ENCODE measurements at regions of chr11 and their contacts with region 1.

Region 1: DNA sequence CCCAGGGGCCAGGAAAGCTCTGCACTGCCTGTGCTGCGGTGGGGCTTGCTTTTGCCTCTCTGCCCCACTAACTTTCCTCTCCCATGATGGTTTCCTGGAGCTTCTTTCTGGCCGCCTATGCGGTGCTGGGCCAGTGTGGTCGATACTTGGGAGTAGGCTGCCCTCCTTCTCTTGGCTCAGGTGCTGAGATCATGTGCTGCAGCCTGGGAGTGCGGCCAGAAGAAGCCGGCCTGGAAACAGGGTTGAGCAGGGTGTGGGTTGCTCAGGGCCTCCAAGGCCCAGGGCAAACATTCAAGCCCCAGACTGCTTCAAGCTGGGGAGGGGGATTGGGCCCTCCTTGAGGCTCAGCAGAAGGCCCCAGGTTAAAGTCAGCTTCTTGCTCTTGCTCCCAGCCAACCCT is 125.0 kb downstream of the NTM start:
- DNase-seq: no peak
- H3K4me3 ChIP-seq: no peak overlapping the region
- H3K27ac ChIP-seq: no peak overlapping the region
- H3K4me1 ChIP-seq: no peaks in the 10 kb centered on the region
- H3K27me3 ChIP-seq: no peaks in the 10 kb centered on the region
- CTCF ChIP-seq: no peak

Region 2: DNA sequence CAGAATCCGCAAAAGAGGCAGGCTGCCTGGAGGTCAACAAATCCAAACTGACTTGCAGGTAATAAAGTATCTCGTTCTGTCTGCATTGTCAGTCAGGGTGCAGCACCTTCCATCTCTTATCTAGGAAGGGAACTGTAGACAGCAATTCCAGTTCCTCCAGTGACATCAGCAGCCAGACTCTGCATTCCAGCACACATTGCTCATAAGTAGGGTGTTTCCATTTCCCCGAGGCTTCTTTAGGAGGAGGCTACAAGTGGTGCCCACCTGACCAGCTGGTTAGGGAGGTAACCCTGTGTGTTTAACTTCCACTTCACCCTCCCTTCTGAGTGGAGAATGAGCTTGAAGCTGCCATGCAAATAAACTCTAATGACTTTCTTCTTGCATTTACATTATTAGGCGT is 71.7 kb before region 1 on chr11:
- CTCF ChIA-PET with region 1: no interaction called
- POLR2A ChIA-PET with region 1: no interaction called
- intact Hi-C with region 1: loop called (anchors 1 kb)
- DNase-seq: peak; percentile 65 to 77
- H3K4me3 ChIP-seq: no peak overlapping the region
- H3K27ac ChIP-seq: no peak overlapping the region
- H3K4me1 ChIP-seq: no peaks in the 10 kb centered on the region
- H3K27me3 ChIP-seq: no peaks in the 10 kb centered on the region
- CTCF ChIP-seq: no peak

Region 3: DNA sequence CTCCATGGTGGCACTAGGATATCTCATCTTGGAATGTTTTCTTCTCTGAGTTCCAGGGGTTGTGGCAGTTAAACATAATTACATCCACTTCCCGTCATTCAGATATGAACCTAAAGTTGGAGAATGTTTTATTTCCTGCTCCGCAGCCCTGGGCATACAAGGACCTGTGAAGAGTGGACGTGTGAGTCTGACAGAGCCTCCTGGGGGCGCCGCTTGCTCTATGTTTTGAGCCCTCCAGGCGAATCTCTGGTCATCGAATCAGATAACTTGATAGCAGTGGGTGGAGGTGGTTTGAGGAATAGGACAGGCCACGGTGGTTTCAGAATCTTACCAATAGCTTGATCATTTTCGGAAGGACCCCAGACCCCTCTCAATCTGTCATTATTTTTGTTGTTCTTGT is 49.2 kb after region 1 on chr11:
- CTCF ChIA-PET with region 1: no interaction called
- POLR2A ChIA-PET with region 1: no interaction called
- intact Hi-C with region 1: no loop called
- DNase-seq: peak in 1 of 2 experiments; percentile 12
- H3K4me3 ChIP-seq: no peak overlapping the region
- H3K27ac ChIP-seq: no peak overlapping the region
- H3K4me1 ChIP-seq: no peaks in the 10 kb centered on the region
- H3K27me3 ChIP-seq: peaks cover 27% of the 10 kb centered on the region; the same call in 1 of the 2 replicates
- CTCF ChIP-seq: no peak